Activated CD8-positive, alpha-beta T cell treated with anti-CD3 and anti-CD28 coated beads for 36 hours (primary cell): ENCODE measurements at regions of chr10 and their contacts with region 1.

Region 1: DNA sequence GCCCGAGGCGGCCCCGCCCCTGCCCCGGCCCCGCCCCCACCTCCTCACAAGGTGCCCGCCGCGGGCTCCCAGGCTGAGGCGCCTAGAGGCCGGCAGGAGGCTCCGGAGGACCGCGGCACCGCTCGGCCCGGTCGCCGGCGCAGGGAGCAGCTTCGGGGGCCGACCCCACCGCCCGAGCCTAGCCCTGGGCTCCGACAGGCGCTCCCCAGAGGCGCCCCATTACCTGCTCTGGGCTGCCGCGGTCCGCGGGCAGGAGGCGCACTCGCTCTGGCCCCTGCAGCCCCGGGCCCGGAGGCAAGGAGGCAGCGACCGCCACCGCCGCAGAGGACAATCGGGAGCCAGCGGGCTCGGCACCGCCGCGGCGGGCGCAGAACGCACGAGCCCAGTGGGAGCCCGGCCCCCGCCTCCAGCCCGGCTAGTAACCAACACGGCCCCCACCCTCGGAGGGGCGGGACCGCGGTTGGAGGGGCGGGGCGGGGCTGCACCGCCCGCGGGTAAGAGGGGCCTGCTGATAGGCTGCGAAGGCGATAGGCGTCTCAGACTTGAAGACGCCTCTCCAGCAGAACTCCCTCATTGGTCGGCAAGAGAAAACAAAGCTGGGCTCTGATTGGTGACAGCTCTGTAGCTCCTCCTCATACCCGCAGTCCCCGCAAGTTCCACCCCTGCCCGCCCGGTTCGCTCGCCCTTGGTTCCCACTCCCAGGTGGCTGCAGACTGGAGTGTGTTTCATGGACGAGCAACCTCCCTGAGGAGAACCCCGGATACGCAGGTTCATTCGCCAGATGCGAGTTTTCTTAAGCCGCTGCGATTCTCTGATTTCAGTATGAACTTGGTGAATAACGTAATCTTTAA is at the start of gene MPP7:
- DNase-seq: peak; percentile 97
- ATAC-seq: peak; percentile 94
- H3K4me3 Mint-ChIP-seq: peak within 1 kb of the TSS; percentile 92
- H3K27ac Mint-ChIP-seq: peak within 1 kb of the TSS; percentile 81
- H3K4me1 Mint-ChIP-seq: peaks cover 48% of the 10 kb centered on the region
- H3K27me3 Mint-ChIP-seq: no peaks in the 10 kb centered on the region
- CTCF ChIP-seq: peak; percentile 57
- total RNA-seq, gene MPP7: 12.6 to 14.3 TPM

Region 2: GRCh38 chr10:28250782-28251181 is 52.1 kb before region 1 on chr10:
- CTCF ChIA-PET with region 1: interaction called, 34 read pairs
- POLR2A ChIA-PET with region 1: no interaction called
- intact Hi-C with region 1: loop called (anchors 5 kb)
- DNase-seq: no peak
- ATAC-seq: no peak
- H3K4me3 Mint-ChIP-seq: no peak overlapping the region
- H3K27ac Mint-ChIP-seq: no peak overlapping the region
- H3K4me1 Mint-ChIP-seq: peaks cover 34% of the 10 kb centered on the region
- H3K27me3 Mint-ChIP-seq: no peaks in the 10 kb centered on the region
- CTCF ChIP-seq: peak; percentile 62

Region 3: DNA sequence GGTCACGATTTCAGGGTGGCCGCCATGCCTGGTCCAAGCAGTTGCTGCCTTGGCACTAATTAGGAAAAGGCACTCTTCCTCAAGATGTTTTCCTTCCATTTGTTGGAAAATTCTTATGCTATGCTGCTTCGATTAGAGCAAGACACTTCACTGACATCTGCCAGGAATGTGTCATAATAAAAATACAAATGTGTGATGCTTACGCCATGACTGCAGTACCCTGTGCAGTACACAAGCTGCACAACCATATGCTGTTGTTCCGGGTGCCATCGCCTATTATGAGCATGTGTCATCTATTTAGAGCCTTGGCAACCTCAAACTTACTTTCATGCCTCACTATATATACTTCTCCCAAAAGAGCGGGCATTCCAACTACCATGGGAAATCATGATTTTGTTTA is 14.9 kb after region 1 on chr10:
- CTCF ChIA-PET with region 1: interaction called, 21 read pairs
- POLR2A ChIA-PET with region 1: interaction called, 5 read pairs
- intact Hi-C with region 1: no loop called
- DNase-seq: no peak
- ATAC-seq: no peak
- H3K4me3 Mint-ChIP-seq: no peak overlapping the region
- H3K27ac Mint-ChIP-seq: no peak overlapping the region
- H3K4me1 Mint-ChIP-seq: peaks cover 31% of the 10 kb centered on the region
- H3K27me3 Mint-ChIP-seq: no peaks in the 10 kb centered on the region
- CTCF ChIP-seq: no peak

Region 4: DNA sequence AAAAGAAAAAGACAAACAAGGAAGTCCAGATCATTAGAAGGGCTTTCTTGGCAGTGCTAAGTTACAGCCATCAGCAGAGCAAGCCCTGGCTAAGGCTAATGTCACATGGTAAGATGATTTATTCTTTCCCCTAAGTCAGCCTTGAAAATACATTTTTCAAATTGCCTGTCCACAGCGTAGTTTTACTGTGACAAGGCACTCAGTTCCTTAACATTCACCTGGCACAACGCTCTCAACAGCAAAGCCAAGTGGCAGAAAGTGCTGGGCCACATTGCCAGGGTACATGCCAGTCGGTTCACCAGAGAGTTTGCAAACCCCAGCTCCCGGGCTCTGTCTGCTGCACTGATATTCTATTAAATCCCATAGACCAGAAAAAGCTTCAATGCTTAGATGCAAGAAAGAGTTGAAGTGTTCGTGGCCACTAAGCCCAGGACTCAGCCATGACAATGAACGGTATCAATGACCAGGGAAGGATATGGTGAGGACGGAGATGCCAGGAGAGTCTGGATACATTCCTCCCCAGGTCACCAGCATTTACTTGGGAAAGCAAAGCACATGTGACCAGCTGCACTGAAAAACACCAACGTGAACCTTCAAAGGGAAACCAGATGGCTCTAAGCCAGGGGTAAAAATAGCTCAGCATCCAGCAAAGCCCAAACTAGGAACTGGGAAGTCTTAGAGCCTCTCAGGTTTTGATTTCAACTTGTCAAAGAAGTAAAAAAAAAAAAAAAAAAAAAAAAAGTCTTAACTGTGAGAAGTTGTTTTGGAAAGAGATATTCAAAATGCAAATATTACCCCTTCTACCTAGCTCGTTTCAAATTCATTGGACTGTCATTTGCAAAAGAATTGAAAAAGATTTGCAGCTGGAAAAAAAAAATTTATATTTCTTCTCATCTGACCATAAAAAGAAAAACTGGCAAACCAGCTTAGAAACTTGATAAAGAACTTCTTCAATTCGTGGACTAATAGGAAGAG is 23.9 kb after region 1 on chr10:
- CTCF ChIA-PET with region 1: interaction called, 38 read pairs
- POLR2A ChIA-PET with region 1: interaction called, 3 read pairs
- intact Hi-C with region 1: no loop called
- DNase-seq: no peak
- ATAC-seq: peak; percentile 43
- H3K4me3 Mint-ChIP-seq: peak overlapping the region; percentile 61
- H3K27ac Mint-ChIP-seq: peak overlapping the region; percentile 83
- H3K4me1 Mint-ChIP-seq: peaks cover 58% of the 10 kb centered on the region
- H3K27me3 Mint-ChIP-seq: no peaks in the 10 kb centered on the region
- CTCF ChIP-seq: no peak

Region 5: DNA sequence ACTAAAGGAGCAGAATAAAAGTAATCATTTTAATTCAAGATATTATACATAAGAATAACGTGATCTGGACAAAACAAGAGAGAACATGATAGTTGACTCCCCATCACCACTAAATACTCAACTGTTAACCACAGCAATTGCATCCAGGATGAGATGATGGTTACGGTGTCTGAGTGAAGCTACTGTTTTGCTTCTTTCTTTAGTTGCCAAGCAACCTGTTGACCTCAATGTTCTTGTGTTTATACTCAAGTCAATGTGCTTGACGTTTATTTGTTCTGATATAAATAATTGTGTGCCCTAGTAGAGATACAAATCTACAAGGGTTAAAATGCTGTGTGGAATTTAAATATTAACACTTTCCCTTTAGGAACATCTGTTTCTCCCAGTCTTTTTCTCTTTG is 31.4 kb after region 1 on chr10:
- CTCF ChIA-PET with region 1: interaction called, 38 read pairs
- POLR2A ChIA-PET with region 1: interaction called, 16 read pairs
- intact Hi-C with region 1: loop called (anchors 2 kb)
- DNase-seq: peak; percentile 62
- ATAC-seq: peak; percentile 55
- H3K4me3 Mint-ChIP-seq: peak overlapping the region; percentile 86
- H3K27ac Mint-ChIP-seq: peak overlapping the region; percentile 99
- H3K4me1 Mint-ChIP-seq: peaks cover 59% of the 10 kb centered on the region
- H3K27me3 Mint-ChIP-seq: no peaks in the 10 kb centered on the region
- CTCF ChIP-seq: no peak

Region 6: GRCh38 chr10:28367929-28368484 is 65.1 kb after region 1 on chr10:
- CTCF ChIA-PET with region 1: interaction called, 20 read pairs
- POLR2A ChIA-PET with region 1: interaction called, 3 read pairs
- intact Hi-C with region 1: loop called (anchors 5 kb)
- DNase-seq: peak; percentile 75
- ATAC-seq: peak; percentile 93
- H3K4me3 Mint-ChIP-seq: peak overlapping the region; percentile 54
- H3K27ac Mint-ChIP-seq: peak overlapping the region; percentile 91
- H3K4me1 Mint-ChIP-seq: peaks cover 34% of the 10 kb centered on the region
- H3K27me3 Mint-ChIP-seq: no peaks in the 10 kb centered on the region
- CTCF ChIP-seq: no peak